ENCODE measurements at regions of chr14 and their contacts with region 1.

Region 1: GRCh38 chr14:65164068-65164824 is 61.9 kb upstream of the MAX start:
- DNase-seq: peak; percentile 57
- H3K4me3 Mint-ChIP-seq: no peak overlapping the region
- H3K27ac Mint-ChIP-seq: no peak overlapping the region
- H3K4me1 Mint-ChIP-seq: peaks cover 5% of the 10 kb centered on the region
- H3K27me3 Mint-ChIP-seq: no peaks in the 10 kb centered on the region

Region 2: GRCh38 chr14:65179918-65180724 is 15.9 kb after region 1 on chr14:
- CTCF ChIA-PET with region 1: interaction called, 13 read pairs
- intact Hi-C with region 1: no loop called
- DNase-seq: peak; percentile 82
- H3K4me3 Mint-ChIP-seq: no peak overlapping the region
- H3K27ac Mint-ChIP-seq: peak overlapping the region; percentile 47
- H3K4me1 Mint-ChIP-seq: peaks cover 13% of the 10 kb centered on the region
- H3K27me3 Mint-ChIP-seq: peaks cover 4% of the 10 kb centered on the region

Region 3: DNA sequence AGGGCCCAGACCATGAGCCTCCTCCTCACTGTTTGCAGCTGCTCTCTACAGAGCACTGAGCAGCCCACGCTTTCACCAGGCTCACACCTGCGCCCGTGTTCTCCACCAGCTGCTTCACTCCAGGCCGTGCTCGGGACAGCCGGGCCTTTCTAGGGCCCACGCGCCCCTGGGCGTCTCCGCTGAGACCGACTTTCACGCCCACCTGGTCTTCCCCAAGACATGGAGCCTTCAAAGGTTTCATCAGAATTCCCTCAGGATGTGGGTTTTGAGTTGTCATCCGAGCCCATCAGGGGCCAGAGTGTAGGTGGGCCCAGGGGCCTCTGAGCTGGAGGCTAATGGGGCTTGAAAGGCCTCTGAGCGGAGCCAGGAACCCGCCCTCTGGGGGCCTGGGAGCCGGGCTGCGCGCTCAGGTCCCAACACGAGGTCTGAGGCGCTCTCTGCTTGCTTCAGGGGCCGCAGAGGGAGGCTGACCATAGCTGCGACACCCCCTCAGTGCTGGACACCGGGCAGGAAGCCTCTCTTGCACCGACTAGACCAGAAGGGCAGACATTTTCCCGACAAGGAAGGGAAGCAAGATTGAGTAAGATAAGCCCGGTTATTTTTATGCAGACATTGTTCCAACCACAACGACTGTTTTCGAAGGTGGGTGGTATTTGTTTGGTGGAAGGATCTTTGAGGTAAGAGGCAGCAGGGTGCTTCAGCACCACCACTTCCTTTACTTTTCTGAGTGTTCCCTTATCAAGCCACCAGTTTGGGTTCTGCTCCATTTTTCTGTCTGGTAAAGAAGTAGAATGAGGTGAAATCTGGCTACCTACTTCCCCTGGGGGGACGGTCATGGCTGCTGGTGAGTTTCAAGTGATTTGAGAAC is 123.3 kb after region 1 on chr14:
- CTCF ChIA-PET with region 1: interaction called, 4 read pairs
- intact Hi-C with region 1: loop called (anchors 2 kb)
- DNase-seq: peak; percentile 66
- H3K4me3 Mint-ChIP-seq: peak overlapping the region; percentile 74
- H3K27ac Mint-ChIP-seq: peak overlapping the region; percentile 98
- H3K4me1 Mint-ChIP-seq: peaks cover 64% of the 10 kb centered on the region
- H3K27me3 Mint-ChIP-seq: no peaks in the 10 kb centered on the region

Region 4: GRCh38 chr14:65356327-65356852 is 192.1 kb after region 1 on chr14:
- CTCF ChIA-PET with region 1: interaction called, 3 read pairs
- intact Hi-C with region 1: loop called (anchors 1 kb)
- DNase-seq: peak; percentile 77
- H3K4me3 Mint-ChIP-seq: no peak overlapping the region
- H3K27ac Mint-ChIP-seq: peak overlapping the region; percentile 63
- H3K4me1 Mint-ChIP-seq: peaks cover 44% of the 10 kb centered on the region
- H3K27me3 Mint-ChIP-seq: no peaks in the 10 kb centered on the region

Region 5: GRCh38 chr14:66070509-66071319 is 906.5 kb after region 1 on chr14:
- CTCF ChIA-PET with region 1: interaction called, 8 read pairs
- intact Hi-C with region 1: loop called (anchors 1 kb)
- DNase-seq: peak; percentile 73
- H3K4me3 Mint-ChIP-seq: no peak overlapping the region
- H3K27ac Mint-ChIP-seq: no peak overlapping the region
- H3K4me1 Mint-ChIP-seq: no peaks in the 10 kb centered on the region
- H3K27me3 Mint-ChIP-seq: no peaks in the 10 kb centered on the region